Lower leg skin (tissue), 4 donors: ENCODE measurements at regions of chr6 and their contacts with region 1.

Region 1: DNA sequence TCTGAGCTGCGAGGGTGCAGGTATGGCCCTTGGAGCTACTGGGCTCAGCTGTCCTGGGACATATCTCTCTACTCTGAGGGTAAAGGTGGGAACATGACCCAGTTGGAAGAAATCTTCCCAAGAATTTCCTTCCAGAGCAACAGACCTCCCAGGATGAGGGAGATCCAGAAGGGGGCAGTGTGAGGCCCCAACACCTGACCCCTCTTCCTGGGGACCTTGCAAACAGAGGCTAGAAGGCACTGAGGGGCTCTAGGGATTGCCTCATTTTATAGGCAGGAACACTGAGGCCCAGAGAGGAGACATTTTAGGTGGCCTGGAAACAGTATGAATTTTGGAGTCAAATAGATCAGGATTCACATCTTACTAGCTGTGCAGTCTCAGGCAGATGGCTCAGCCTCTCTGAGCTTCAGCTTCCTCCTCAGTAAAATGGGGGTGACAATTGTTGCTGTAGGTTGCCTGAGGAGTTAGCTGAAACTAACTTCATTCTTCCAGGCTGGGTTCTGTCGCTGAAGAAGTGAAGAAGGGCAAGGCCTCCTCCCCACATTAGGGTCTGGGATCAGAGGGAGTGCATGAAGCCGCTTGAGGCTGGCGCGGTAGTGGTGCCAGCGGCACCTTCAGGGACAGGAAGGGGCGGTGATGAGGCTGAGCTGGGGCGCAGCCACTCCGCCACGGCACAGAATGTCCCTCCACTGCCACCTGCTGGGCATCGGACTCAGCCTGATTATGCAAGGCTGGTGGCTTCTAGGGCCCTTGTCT is 11.4 kb downstream of the KCNK17 start:
- DNase-seq: peak; percentile 59 to 96
- H3K4me3 ChIP-seq: no peak overlapping the region
- CTCF ChIP-seq: peak in 1 of 3 donors; percentile 70
- POLR2A ChIP-seq: no peak

Region 2: GRCh38 chr6:39166189-39166911 is 136.5 kb before region 1 on chr6:
- intact Hi-C with region 1: loop called (anchors 5 kb)
- DNase-seq: peak; percentile 54 to 93
- H3K4me3 ChIP-seq: no peak overlapping the region
- CTCF ChIP-seq: peak in 1 of 3 donors; percentile 77
- POLR2A ChIP-seq: no peak

Region 3: DNA sequence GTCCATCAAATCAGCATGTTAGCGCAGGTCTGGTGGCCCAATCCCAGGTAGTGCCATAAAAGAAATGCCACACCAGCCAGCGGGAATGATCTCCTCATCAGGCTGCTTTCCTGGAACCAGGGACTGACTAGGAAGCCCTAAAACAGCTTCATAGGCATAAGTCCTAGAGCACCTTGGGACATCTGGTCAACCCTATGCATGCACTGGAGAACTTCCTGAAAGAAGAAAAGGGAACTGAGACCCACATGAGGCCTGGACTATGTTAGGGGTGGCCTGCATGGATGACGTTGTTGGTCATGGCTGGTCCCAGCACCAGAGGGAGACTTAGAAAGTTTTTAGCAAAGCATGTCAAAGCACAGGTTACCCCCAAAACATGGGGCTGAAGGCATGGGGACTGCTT is 27.2 kb after region 1 on chr6:
- intact Hi-C with region 1: no loop called
- DNase-seq: no peak
- H3K4me3 ChIP-seq: no peak overlapping the region
- CTCF ChIP-seq: no peak
- POLR2A ChIP-seq: no peak